ENCODE measurements at regions of chr2 and their contacts with region 1.

Region 1: DNA sequence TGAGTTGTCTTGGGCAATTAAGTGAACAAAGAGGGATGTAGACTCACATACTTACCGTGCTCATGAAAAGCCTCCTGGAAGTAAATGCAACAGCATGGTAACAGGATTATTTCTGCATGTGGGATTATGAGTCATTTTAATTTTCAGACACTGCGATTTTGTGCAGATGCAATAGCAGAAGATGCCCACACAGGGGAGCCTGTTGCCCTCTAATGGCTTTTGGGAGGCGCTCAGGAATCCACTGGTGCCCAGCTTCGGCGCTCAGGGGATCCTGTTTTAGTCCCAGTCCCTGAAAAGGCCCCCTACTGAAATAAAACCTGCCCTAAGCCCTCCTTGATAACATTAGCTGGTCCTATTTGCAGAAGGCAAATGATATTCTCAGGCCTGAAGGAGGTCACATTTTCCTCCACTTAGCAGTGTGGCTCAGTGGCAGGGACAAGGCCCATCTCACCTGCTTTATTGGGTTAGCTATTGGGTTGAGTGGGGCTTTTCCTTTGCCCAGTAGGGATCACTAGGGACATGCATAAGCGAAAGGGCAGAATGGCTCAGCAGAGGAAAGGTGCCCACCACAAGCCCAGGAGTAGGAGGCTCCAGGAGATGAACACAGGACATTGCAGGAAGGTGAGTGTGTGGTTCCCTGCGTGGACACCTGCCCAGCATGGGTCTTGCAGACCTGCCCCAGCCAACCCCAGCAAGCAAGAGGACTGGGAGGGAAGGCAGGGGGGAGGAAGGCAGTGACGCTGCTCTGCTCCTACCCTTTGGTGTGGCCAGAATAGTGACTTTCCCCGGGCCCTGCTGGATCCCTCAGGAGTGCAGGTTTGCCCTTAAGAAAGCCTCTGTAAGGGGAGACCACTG is 26.5 kb upstream of the KCNS3 start:
- DNase-seq: no peak
- ATAC-seq: peak; percentile 76
- H3K4me3 Mint-ChIP-seq: no peak overlapping the region
- H3K27ac Mint-ChIP-seq: no peak overlapping the region
- H3K4me1 Mint-ChIP-seq: peaks cover 4% of the 10 kb centered on the region
- H3K27me3 Mint-ChIP-seq: peaks cover 21% of the 10 kb centered on the region
- CTCF ChIP-seq: peak; percentile 31

Region 2: GRCh38 chr2:17719562-17720371 is 132.2 kb before region 1 on chr2:
- CTCF ChIA-PET with region 1: interaction called, 11 read pairs
- POLR2A ChIA-PET with region 1: no interaction called
- intact Hi-C with region 1: no loop called
- DNase-seq: no peak
- ATAC-seq: peak; percentile 70
- H3K4me3 Mint-ChIP-seq: no peak overlapping the region
- H3K27ac Mint-ChIP-seq: peak overlapping the region; percentile 78
- H3K4me1 Mint-ChIP-seq: peaks cover 3% of the 10 kb centered on the region
- H3K27me3 Mint-ChIP-seq: no peaks in the 10 kb centered on the region
- CTCF ChIP-seq: peak; percentile 44

Region 3: GRCh38 chr2:17918789-17919188 is 66.8 kb after region 1 on chr2:
- CTCF ChIA-PET with region 1: no interaction called
- POLR2A ChIA-PET with region 1: no interaction called
- intact Hi-C with region 1: loop called (anchors 2 kb)
- DNase-seq: no peak
- ATAC-seq: no peak
- H3K4me3 Mint-ChIP-seq: no peak overlapping the region
- H3K27ac Mint-ChIP-seq: no peak overlapping the region
- H3K4me1 Mint-ChIP-seq: peaks cover 2% of the 10 kb centered on the region
- H3K27me3 Mint-ChIP-seq: peaks cover 2% of the 10 kb centered on the region
- CTCF ChIP-seq: no peak

Region 4: GRCh38 chr2:18149645-18150246 is 297.8 kb after region 1 on chr2:
- CTCF ChIA-PET with region 1: interaction called, 8 read pairs
- POLR2A ChIA-PET with region 1: no interaction called
- intact Hi-C with region 1: loop called (anchors 1 kb)
- DNase-seq: no peak
- ATAC-seq: no peak
- H3K4me3 Mint-ChIP-seq: no peak overlapping the region
- H3K27ac Mint-ChIP-seq: no peak overlapping the region
- H3K4me1 Mint-ChIP-seq: no peaks in the 10 kb centered on the region
- H3K27me3 Mint-ChIP-seq: peaks cover 18% of the 10 kb centered on the region
- CTCF ChIP-seq: no peak

Region 5: GRCh38 chr2:18178736-18179349 is 326.9 kb after region 1 on chr2:
- CTCF ChIA-PET with region 1: interaction called, 4 read pairs
- POLR2A ChIA-PET with region 1: no interaction called
- intact Hi-C with region 1: loop called (anchors 1 kb)
- DNase-seq: no peak
- ATAC-seq: peak; percentile 40
- H3K4me3 Mint-ChIP-seq: no peak overlapping the region
- H3K27ac Mint-ChIP-seq: no peak overlapping the region
- H3K4me1 Mint-ChIP-seq: no peaks in the 10 kb centered on the region
- H3K27me3 Mint-ChIP-seq: peaks cover 5% of the 10 kb centered on the region
- CTCF ChIP-seq: peak; percentile 23

Region 6: DNA sequence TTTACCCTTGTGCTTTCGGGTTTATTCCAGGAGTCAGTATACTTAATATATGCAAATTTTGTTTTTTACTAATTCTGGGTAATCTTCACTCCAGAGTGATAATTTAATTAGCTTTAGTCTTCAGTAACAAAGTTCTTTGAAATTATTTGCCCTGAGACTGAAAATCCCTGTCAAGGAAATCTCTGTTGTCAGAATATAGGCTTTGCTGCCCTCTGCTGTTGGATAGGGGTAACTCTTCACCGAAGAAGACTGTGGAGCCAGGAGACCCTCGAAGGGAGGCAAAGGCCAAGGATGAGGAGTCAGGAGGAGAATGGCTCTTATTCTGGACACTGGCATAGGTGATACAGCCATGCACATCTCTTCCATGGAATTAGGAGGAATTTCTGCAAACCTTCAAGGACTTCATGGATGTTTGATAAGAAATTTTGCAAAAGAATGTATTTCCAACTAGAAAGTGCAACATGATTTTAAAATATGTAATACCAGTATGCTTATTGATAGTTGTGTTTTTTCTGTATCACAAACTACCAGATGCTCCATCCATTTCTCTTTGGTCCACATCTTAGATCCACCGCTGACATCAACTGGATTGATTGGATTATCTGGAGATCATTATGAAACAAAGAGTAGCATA is 526.2 kb after region 1 on chr2:
- CTCF ChIA-PET with region 1: interaction called, 7 read pairs
- POLR2A ChIA-PET with region 1: no interaction called
- intact Hi-C with region 1: loop called (anchors 1 kb)
- DNase-seq: no peak
- ATAC-seq: no peak
- H3K4me3 Mint-ChIP-seq: no peak overlapping the region
- H3K27ac Mint-ChIP-seq: no peak overlapping the region
- H3K4me1 Mint-ChIP-seq: no peaks in the 10 kb centered on the region
- H3K27me3 Mint-ChIP-seq: peaks cover 11% of the 10 kb centered on the region
- CTCF ChIP-seq: no peak

Region 7: DNA sequence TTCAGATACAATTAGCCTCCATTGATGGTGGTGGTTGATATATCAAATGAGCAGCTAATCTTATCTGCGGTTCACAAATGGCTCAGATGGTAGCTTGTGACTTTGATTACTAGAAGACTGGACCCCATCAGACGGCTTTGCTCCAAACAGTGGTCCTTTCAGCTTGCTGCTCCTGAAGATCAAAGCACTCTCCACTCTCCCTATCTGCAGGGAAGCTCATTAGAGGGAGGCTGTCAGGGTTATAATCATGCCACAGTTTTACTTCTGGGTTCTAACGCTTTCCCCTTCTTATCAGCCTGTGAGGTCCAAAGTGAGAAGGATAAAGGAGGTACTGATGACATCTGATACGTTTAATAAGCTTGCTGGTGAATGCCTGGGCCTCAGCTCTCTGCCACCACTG is 984.5 kb after region 1 on chr2:
- CTCF ChIA-PET with region 1: no interaction called
- POLR2A ChIA-PET with region 1: no interaction called
- intact Hi-C with region 1: no loop called
- DNase-seq: no peak
- ATAC-seq: no peak
- H3K4me3 Mint-ChIP-seq: no peak overlapping the region
- H3K27ac Mint-ChIP-seq: no peak overlapping the region
- H3K4me1 Mint-ChIP-seq: no peaks in the 10 kb centered on the region
- H3K27me3 Mint-ChIP-seq: no peaks in the 10 kb centered on the region
- CTCF ChIP-seq: no peak

Measured in activated B cell treated with CpG ODN at 0.5 μM for 24 hours (primary cell).